Mammary epithelial cell (primary cell): ENCODE measurements at regions of chr11 and their contacts with region 1.

Region 1: GRCh38 chr11:46755962-46756361 is 36.9 kb downstream of the F2 start:
- DNase-seq: no peak
- H3K4me3 ChIP-seq: no peak overlapping the region
- H3K27ac ChIP-seq: no peak overlapping the region
- H3K4me1 ChIP-seq: no peaks in the 10 kb centered on the region
- H3K27me3 ChIP-seq: no peaks in the 10 kb centered on the region
- CTCF ChIP-seq: no peak

Region 2: GRCh38 chr11:46701078-46701654 is 54.8 kb before region 1 on chr11:
- CTCF ChIA-PET with region 1: no interaction called
- dilution Hi-C with region 1: no loop called
- in situ Hi-C with region 1: no loop called
- intact Hi-C with region 1: no loop called
- DNase-seq: no peak
- H3K4me3 ChIP-seq: peak overlapping the region; percentile 75 to 97 (median 92)
- H3K27ac ChIP-seq: peak overlapping the region; percentile 91
- H3K4me1 ChIP-seq: peaks cover 6% of the 10 kb centered on the region
- H3K27me3 ChIP-seq: no peaks in the 10 kb centered on the region
- CTCF ChIP-seq: no peak

Region 3: DNA sequence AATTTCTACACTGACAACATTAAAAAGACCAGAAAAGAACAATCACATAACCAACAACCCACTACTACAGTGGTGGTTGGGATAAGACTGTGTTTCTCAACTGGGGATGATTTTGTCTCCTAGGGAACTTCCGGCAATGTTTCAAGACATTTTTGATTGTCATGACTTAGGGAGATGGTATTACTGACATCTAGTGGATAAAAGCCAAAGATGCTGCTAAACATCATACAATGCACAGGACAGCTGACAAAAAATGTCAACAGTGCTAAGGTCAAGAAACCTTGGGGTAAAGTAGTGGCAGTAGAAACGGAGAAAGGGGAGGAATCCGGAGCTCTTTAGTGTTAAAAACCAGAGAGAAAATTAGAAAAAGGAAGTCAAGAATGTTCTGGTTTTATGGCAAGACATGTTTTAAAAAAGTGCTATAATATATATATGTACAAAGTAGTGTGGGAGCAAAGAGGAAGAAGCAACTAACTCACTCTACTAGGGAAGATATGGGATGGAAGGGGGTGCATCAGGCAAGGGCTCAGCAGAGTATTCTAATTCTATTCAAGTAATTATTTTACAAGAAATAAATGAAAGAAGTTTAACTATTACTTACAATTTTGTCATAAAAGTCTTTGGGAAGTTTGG is 53.0 kb after region 1 on chr11:
- CTCF ChIA-PET with region 1: no interaction called
- dilution Hi-C with region 1: loop called (anchors 5 kb)
- in situ Hi-C with region 1: loop called in 1 of 2 experiments (anchors 10 kb)
- intact Hi-C with region 1: no loop called
- DNase-seq: peak; percentile 40
- H3K4me3 ChIP-seq: no peak overlapping the region
- H3K27ac ChIP-seq: no peak overlapping the region
- H3K4me1 ChIP-seq: no peaks in the 10 kb centered on the region
- H3K27me3 ChIP-seq: no peaks in the 10 kb centered on the region
- CTCF ChIP-seq: peak; percentile 23 to 45

Region 4: GRCh38 chr11:46826310-46827044 is 70.5 kb after region 1 on chr11:
- CTCF ChIA-PET with region 1: no interaction called
- dilution Hi-C with region 1: no loop called
- in situ Hi-C with region 1: no loop called
- intact Hi-C with region 1: no loop called
- DNase-seq: peak; percentile 77
- H3K4me3 ChIP-seq: peak overlapping the region; percentile 41 to 62 (median 57)
- H3K27ac ChIP-seq: peak overlapping the region; percentile 19
- H3K4me1 ChIP-seq: peaks cover 29% of the 10 kb centered on the region
- H3K27me3 ChIP-seq: no peaks in the 10 kb centered on the region
- CTCF ChIP-seq: peak in 1 of 2 donors; percentile 28